SK-N-SH (cell line): ENCODE measurements at regions of chr9 and their contacts with region 1.

Region 1: GRCh38 chr9:7570107-7570720 is 229.4 kb downstream of the DMAC1 start:
- DNase-seq: peak; percentile 29
- H3K4me3 ChIP-seq: peak overlapping the region in 1 of 2 experiments; percentile 21; a peak in 1 of 4 replicates
- H3K27ac ChIP-seq: no peak overlapping the region
- H3K4me1 ChIP-seq: no peaks in the 10 kb centered on the region
- H3K27me3 ChIP-seq: no peaks in the 10 kb centered on the region; the same call in 1 of the 2 replicates
- CTCF ChIP-seq: peak; percentile 88
- EP300 ChIP-seq: no peak
- RAD21 ChIP-seq: peak; percentile 85

Region 2: DNA sequence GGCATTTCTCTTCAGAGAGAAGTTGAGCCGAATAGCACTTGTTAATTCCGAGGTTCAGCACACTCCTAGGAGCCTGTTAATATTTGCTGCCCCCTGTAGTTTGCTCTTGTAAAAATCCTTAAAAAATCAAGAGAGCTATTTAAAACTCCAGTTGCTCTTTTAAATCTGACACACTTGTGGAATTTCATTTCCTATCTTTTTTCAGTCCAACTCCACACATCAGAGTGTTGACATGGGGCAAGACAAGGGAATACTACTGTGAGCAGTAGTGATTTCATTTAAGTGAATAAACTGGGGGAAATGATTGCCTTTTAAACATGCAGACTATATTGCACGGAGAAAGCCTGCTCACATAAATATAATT is 1325.6 kb after region 1 on chr9:
- CTCF ChIA-PET with region 1: interaction called, 14 read pairs
- POLR2A ChIA-PET with region 1: no interaction called
- DNase-seq: peak; percentile 41
- H3K4me3 ChIP-seq: no peak overlapping the region
- H3K27ac ChIP-seq: no peak overlapping the region
- H3K4me1 ChIP-seq: no peaks in the 10 kb centered on the region
- H3K27me3 ChIP-seq: no peaks in the 10 kb centered on the region
- CTCF ChIP-seq: peak; percentile 70
- EP300 ChIP-seq: no peak
- RAD21 ChIP-seq: peak; percentile 87